ENCODE measurements at regions of chr5 and their contacts with region 1.

Region 1: DNA sequence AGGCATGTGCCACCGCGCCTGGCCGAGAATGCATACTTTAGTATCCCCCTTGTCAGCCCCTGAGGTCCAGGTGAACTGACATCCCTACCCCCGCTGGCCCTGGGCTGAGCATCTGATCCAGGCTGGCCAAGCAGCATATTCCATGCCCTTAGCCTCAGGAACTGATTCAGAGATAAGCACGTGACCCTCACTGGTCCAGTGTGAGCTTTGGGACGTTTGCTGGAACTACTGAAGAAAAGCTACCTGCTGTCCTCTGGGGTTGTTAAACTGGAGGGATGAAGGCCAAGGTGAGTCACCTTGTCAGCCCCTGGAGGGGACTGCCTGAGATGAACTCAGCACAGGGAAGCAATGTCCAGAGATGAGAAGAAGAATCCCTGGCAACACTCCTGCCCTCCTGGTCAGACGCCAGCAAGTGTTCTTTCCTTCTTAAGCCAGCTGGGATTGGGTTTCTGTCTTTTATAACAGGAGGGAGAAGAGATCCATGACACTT is 59.1 kb upstream of the FBXW11 start:
- DNase-seq: no peak
- ATAC-seq: no peak
- H3K4me3 ChIP-seq: no peak overlapping the region
- H3K27ac ChIP-seq: no peak overlapping the region
- H3K4me1 ChIP-seq: no peaks in the 10 kb centered on the region
- H3K27me3 ChIP-seq: no peaks in the 10 kb centered on the region
- CTCF ChIP-seq: no peak

Region 2: DNA sequence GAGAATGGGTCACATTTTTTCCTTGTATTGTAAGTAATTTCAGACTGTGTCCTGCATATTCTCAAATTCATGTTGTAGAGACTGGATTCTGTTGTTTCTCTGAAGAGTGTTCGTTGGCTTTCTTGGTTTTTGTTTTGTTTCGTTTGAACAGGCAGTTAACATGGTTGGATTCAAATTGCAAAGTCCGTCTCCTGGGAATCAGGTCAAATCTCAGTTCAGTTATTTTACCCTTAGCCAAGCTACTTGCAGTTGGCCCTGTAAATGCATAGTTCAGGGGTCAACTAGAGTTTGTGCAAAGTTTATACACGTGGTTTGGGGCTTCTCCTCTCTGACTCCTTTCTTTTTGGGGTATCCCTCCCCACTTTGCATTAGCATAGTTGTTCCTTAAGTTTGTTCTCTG is 37.4 kb before region 1 on chr5:
- CTCF ChIA-PET with region 1: no interaction called
- POLR2A ChIA-PET with region 1: no interaction called
- in situ Hi-C with region 1: no loop called
- intact Hi-C with region 1: no loop called
- DNase-seq: no peak
- ATAC-seq: no peak
- H3K4me3 ChIP-seq: no peak overlapping the region
- H3K27ac ChIP-seq: no peak overlapping the region
- H3K4me1 ChIP-seq: no peaks in the 10 kb centered on the region
- H3K27me3 ChIP-seq: no peaks in the 10 kb centered on the region
- CTCF ChIP-seq: no peak

Region 3: GRCh38 chr5:172159016-172159415 is 93.5 kb after region 1 on chr5:
- CTCF ChIA-PET with region 1: no interaction called
- POLR2A ChIA-PET with region 1: interaction called, 24 read pairs
- in situ Hi-C with region 1: no loop called
- intact Hi-C with region 1: no loop called
- DNase-seq: no peak
- ATAC-seq: no peak
- H3K4me3 ChIP-seq: no peak overlapping the region
- H3K27ac ChIP-seq: no peak overlapping the region
- H3K4me1 ChIP-seq: no peaks in the 10 kb centered on the region
- H3K27me3 ChIP-seq: no peaks in the 10 kb centered on the region
- CTCF ChIP-seq: no peak

Measured in Panc1 (cell line).